B cell (primary cell): ENCODE measurements at regions of chr14 and their contacts with region 1.

Region 1: DNA sequence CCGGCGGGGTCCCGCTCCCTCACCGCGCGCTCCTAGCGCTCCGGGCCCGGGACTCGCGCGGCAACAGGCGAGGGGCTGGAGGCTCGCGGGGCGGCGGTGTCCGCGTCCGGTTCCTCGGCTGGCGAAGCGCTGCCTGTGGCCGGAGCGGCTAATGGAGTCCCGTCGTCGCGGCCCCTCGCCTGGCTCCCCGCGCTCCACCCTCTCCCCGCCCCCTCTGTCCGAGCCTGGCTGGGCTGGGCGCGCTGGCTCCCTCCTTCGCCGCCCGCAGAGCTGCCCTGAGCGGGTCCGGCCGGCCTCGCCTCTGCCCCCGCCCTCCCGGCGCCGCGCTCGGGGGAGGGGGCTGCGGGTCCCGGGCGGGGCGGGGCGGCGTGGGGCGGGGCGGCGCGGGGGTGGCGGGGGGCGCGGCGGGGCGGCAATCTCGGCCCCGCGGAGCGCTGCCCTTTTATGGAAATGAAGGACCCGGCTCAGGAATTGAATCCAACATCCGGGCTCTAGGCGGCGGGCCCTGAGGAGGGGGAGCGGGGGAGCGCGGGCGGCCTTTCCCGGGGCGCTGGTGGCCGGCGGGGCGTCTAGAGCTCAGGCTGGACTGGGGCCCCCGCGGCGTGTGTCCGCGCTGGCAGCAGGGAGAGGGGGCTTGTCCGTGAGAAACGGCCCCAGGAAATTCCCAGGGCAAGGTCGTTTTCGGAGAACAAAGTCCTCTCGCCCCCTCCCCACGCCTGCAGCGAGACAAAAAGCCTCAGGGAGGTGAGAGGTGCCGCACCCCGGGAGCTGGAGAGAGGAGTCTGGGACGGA is at the start of gene FERMT2:
- DNase-seq: no peak
- ATAC-seq: peak; percentile 56
- H3K4me3 ChIP-seq: peak within 1 kb of the TSS; percentile 32 to 64 (median 57)
- H3K4me3 Mint-ChIP-seq: peak within 1 kb of the TSS; percentile 94
- H3K27ac ChIP-seq: no peak within 1 kb of the TSS
- H3K27ac Mint-ChIP-seq: no peak within 1 kb of the TSS
- H3K4me1 ChIP-seq: peaks cover 24 to 27% of the 10 kb centered on the region in 2 donors
- H3K4me1 Mint-ChIP-seq: peaks cover 20% of the 10 kb centered on the region
- H3K27me3 ChIP-seq: peaks cover 6 to 48% (median 32%) of the 10 kb centered on the region in 4 experiments
- H3K27me3 Mint-ChIP-seq: peaks cover 49% of the 10 kb centered on the region
- CTCF ChIP-seq: no peak
- total RNA-seq, gene FERMT2: 0.05 TPM in 1 of 2 replicates, not detected in the other

Region 2: DNA sequence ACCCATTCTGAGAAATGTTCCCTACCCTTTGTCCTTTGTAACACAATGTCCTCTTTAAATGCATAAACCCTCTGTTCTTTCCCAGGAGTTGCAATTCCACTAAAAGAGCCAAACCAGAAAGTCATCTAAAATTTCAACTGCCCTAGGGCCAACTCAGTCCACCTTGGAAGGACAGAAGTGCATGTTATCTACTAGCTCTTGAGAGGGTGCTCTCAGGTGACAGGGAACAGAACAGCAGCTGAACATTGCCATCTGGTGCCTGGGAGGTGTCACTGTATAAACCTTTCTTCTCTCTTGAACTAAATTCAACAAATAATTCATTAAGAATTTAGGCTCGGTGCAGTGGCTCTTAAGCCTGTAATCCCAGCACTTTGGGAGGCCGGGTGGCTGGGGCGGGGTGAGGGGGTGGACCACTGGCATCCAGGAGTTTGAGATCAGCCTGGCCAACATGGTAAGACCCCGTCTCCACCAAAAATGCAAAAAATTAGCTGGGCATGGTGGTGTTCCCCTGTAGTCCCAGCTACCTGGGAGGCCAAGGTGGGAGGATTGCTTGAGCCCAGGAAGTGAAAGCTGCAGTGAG is 10.1 kb after region 1 on chr14:
- CTCF ChIA-PET with region 1: interaction called, 13 read pairs
- POLR2A ChIA-PET with region 1: no interaction called
- intact Hi-C with region 1: no loop called
- DNase-seq: peak; percentile 47
- ATAC-seq: peak; percentile 43
- H3K4me3 ChIP-seq: no peak overlapping the region
- H3K4me3 Mint-ChIP-seq: no peak overlapping the region
- H3K27ac ChIP-seq: no peak overlapping the region
- H3K27ac Mint-ChIP-seq: no peak overlapping the region
- H3K4me1 ChIP-seq: no peaks in the 10 kb centered on the region
- H3K4me1 Mint-ChIP-seq: no peaks in the 10 kb centered on the region
- H3K27me3 ChIP-seq: no peaks in the 10 kb centered on the region
- H3K27me3 Mint-ChIP-seq: no peaks in the 10 kb centered on the region
- CTCF ChIP-seq: peak; percentile 59

Region 3: GRCh38 chr14:54291491-54292191 is 1340.5 kb after region 1 on chr14:
- CTCF ChIA-PET with region 1: no interaction called
- POLR2A ChIA-PET with region 1: no interaction called
- intact Hi-C with region 1: no loop called
- DNase-seq: no peak
- ATAC-seq: no peak
- H3K4me3 ChIP-seq: no peak overlapping the region
- H3K4me3 Mint-ChIP-seq: no peak overlapping the region
- H3K27ac ChIP-seq: no peak overlapping the region
- H3K27ac Mint-ChIP-seq: no peak overlapping the region
- H3K4me1 ChIP-seq: no peaks in the 10 kb centered on the region
- H3K4me1 Mint-ChIP-seq: no peaks in the 10 kb centered on the region
- H3K27me3 ChIP-seq: peaks cover 0 to 7% (median 0%) of the 10 kb centered on the region in 4 experiments
- H3K27me3 Mint-ChIP-seq: peaks cover 31% of the 10 kb centered on the region
- CTCF ChIP-seq: no peak